ENCODE measurements at regions of chr6 and their contacts with region 1.

Region 1: GRCh38 chr6:30541515-30542403 is 14.5 kb downstream of the GNL1 start:
- DNase-seq: peak; percentile 94
- H3K4me3 ChIP-seq: peak overlapping the region; percentile 34 to 52 (median 38)
- H3K27ac ChIP-seq: peak overlapping the region; percentile 1 to 44 (median 26)
- H3K4me1 ChIP-seq: peaks cover 8 to 21% (median 11%) of the 10 kb centered on the region in 4 donors
- H3K27me3 ChIP-seq: no peaks in the 10 kb centered on the region
- CTCF ChIP-seq: peak; percentile 95 to 100 (median 97)
- EP300 ChIP-seq: no peak
- POLR2A ChIP-seq: no peak

Region 2: DNA sequence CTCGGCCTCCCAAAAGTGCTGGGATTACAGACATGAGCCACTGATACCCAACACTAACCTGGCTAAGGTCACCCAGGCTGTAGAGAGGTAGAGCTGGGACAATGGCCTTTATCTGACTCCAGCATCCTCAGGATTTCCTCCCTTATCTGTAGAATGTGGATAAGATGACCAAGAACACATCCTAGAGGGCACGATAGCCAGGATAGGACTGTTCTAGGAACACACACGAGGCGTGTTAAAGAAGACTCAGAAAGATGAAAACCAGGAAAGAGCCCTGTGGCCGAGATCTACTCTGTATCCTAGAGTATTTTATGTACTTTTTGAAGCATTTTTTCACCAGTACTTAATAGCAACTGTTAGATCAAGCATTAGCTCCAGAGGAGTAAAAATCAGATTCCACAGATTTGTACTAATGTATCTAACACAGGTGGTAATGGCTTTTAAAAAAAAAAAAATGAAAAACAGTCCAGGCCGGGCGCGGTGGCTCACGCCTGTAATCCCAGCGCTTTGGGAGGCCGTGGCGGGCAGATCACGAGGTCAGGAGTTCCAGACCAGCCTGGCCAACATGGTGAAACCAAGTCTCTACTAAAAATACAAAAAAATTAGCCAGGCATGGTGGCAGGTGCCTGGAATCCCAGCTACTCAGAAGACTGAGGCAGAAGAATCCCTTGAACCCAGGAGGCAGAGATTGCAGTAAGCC is 58.0 kb after region 1 on chr6:
- intact Hi-C with region 1: loop called (anchors 5 kb)
- DNase-seq: no peak
- H3K4me3 ChIP-seq: no peak overlapping the region
- H3K27ac ChIP-seq: no peak overlapping the region
- H3K4me1 ChIP-seq: peaks cover 0 to 10% (median 2%) of the 10 kb centered on the region in 4 donors
- H3K27me3 ChIP-seq: no peaks in the 10 kb centered on the region
- CTCF ChIP-seq: no peak
- EP300 ChIP-seq: no peak
- POLR2A ChIP-seq: no peak